ENCODE measurements at regions of chr3 and their contacts with region 1.

Region 1: GRCh38 chr3:193971261-193971751 is 164.6 kb upstream of the HES1 start:
- DNase-seq: peak; percentile 86
- ATAC-seq: peak; percentile 97
- H3K4me3 ChIP-seq: peak overlapping the region in 3 of 5 experiments; percentile 16 to 43 (median 40)
- H3K4me3 Mint-ChIP-seq: peak overlapping the region; percentile 84
- H3K27ac ChIP-seq: peak overlapping the region; percentile 13 to 28
- H3K27ac Mint-ChIP-seq: peak overlapping the region; percentile 85
- H3K4me1 ChIP-seq: peaks cover 17 to 22% of the 10 kb centered on the region in 2 donors
- H3K4me1 Mint-ChIP-seq: peaks cover 26% of the 10 kb centered on the region
- H3K27me3 ChIP-seq: peaks cover 0 to 15% (median 4%) of the 10 kb centered on the region in 4 experiments
- H3K27me3 Mint-ChIP-seq: peaks cover 17% of the 10 kb centered on the region
- CTCF ChIP-seq: no peak

Region 2: DNA sequence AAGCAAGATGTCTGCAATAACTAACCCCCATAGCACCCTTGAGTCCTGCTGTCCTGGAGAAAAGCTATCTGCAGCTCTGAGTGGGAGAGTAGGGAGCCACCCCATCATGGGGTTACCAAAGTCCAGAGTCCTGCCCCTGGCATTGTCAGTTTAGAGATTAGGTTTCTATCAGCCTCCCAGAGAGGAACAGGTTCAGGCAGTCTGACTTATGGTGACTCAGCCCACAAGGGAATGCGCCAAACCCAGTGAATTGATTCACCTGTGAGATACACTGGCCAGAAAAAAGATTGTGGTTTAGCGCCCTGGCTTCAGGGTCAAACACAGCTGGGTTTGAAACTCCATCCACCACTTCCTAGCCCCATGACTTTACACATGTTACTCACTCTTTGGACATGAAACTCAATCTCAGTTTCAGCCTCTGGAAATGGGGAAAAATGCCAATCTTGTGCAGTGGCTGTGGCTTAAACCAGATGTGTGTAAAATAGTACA is 99.0 kb before region 1 on chr3:
- CTCF ChIA-PET with region 1: interaction called, 4 read pairs
- POLR2A ChIA-PET with region 1: no interaction called
- intact Hi-C with region 1: loop called (anchors 10 kb)
- DNase-seq: peak; percentile 28
- ATAC-seq: peak; percentile 38
- H3K4me3 ChIP-seq: no peak overlapping the region
- H3K4me3 Mint-ChIP-seq: no peak overlapping the region
- H3K27ac ChIP-seq: no peak overlapping the region
- H3K27ac Mint-ChIP-seq: peak overlapping the region; percentile 53
- H3K4me1 ChIP-seq: peaks cover 44 to 49% of the 10 kb centered on the region in 2 donors
- H3K4me1 Mint-ChIP-seq: peaks cover 55% of the 10 kb centered on the region
- H3K27me3 ChIP-seq: no peaks in the 10 kb centered on the region
- H3K27me3 Mint-ChIP-seq: peaks cover 4% of the 10 kb centered on the region
- CTCF ChIP-seq: no peak

Region 3: DNA sequence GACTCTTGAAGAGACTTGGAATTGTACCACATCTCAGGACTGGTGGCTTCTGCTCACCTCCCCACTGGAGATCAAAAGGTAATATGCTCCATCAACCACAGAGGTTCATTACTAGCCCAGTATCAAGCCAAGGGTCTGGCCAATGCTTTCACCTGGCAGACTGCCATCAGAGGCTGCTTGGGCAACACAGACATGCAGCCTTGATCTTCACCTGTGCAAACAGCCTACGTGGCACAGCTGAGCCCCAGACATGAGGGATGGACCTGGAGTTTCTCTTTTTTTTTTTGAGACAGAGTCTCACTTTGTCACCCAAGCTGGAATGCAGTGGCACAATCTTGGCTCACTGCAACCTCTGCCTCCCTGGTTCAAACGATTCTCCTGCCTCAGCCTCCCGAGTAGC is 59.1 kb after region 1 on chr3:
- CTCF ChIA-PET with region 1: no interaction called
- POLR2A ChIA-PET with region 1: no interaction called
- intact Hi-C with region 1: loop called (anchors 5 kb)
- DNase-seq: no peak
- ATAC-seq: no peak
- H3K4me3 ChIP-seq: no peak overlapping the region
- H3K4me3 Mint-ChIP-seq: no peak overlapping the region
- H3K27ac ChIP-seq: no peak overlapping the region
- H3K27ac Mint-ChIP-seq: no peak overlapping the region
- H3K4me1 ChIP-seq: peaks cover 43 to 52% of the 10 kb centered on the region in 2 donors
- H3K4me1 Mint-ChIP-seq: peaks cover 55% of the 10 kb centered on the region
- H3K27me3 ChIP-seq: peaks cover 0 to 3% (median 0%) of the 10 kb centered on the region in 4 experiments
- H3K27me3 Mint-ChIP-seq: no peaks in the 10 kb centered on the region
- CTCF ChIP-seq: no peak

Region 4: GRCh38 chr3:194070634-194071409 is 99.5 kb after region 1 on chr3:
- CTCF ChIA-PET with region 1: interaction called, 4 read pairs
- POLR2A ChIA-PET with region 1: interaction called, 3 read pairs
- intact Hi-C with region 1: loop called (anchors 2 kb)
- DNase-seq: peak; percentile 96
- ATAC-seq: peak; percentile 94
- H3K4me3 ChIP-seq: peak overlapping the region; percentile 30 to 64 (median 52)
- H3K4me3 Mint-ChIP-seq: peak overlapping the region; percentile 85
- H3K27ac ChIP-seq: peak overlapping the region in 1 of 2 donors; percentile 59
- H3K27ac Mint-ChIP-seq: peak overlapping the region; percentile 87
- H3K4me1 ChIP-seq: peaks cover 15 to 22% of the 10 kb centered on the region in 2 donors
- H3K4me1 Mint-ChIP-seq: peaks cover 34% of the 10 kb centered on the region
- H3K27me3 ChIP-seq: no peaks in the 10 kb centered on the region
- H3K27me3 Mint-ChIP-seq: no peaks in the 10 kb centered on the region
- CTCF ChIP-seq: no peak

Region 5: DNA sequence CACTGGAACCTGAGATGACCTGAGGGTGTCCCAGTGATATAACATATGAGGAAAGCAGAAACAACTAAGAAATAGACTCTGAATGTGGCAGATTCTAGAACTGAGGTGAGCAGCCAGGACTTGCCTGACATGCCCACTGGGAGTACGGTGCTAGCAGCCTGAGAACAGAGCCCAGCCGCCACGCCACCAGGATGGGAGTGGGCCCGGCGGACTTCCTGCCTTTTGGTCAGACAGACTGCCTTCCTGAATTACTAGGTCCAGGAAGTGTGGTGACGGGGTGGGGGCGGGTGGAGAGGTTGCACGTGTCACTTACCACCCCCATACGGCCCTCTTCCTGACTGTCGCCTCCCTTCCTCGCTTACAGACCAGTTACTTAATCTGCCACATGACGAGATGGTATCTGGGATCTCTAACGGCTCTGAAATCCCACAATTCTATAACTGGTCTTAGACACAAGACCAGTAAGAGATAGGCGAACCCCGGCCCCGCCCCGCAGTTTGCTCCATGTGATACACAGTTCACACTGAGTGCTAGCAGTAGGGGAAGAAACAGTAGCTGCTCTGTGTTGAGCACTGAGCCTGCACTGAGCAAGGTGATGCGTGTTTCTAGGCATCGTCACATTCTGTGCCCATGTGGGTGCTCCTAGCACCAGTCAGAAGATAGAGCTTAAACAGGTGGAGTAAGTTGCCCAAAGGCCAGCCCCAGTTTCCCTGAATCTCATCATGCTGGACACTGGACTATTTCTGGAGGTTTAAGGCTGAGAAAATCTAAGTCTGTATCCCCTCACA is 284.1 kb after region 1 on chr3:
- CTCF ChIA-PET with region 1: no interaction called
- POLR2A ChIA-PET with region 1: no interaction called
- intact Hi-C with region 1: no loop called
- DNase-seq: peak; percentile 61
- ATAC-seq: peak; percentile 75
- H3K4me3 ChIP-seq: peak overlapping the region in 4 of 5 experiments; percentile 12 to 59 (median 44)
- H3K4me3 Mint-ChIP-seq: peak overlapping the region; percentile 87
- H3K27ac ChIP-seq: peak overlapping the region in 1 of 2 donors; percentile 41
- H3K27ac Mint-ChIP-seq: peak overlapping the region; percentile 74
- H3K4me1 ChIP-seq: peaks cover 10 to 13% of the 10 kb centered on the region in 2 donors
- H3K4me1 Mint-ChIP-seq: peaks cover 17% of the 10 kb centered on the region
- H3K27me3 ChIP-seq: peaks cover 0 to 18% (median 4%) of the 10 kb centered on the region in 4 experiments
- H3K27me3 Mint-ChIP-seq: peaks cover 8% of the 10 kb centered on the region
- CTCF ChIP-seq: no peak

Region 6: DNA sequence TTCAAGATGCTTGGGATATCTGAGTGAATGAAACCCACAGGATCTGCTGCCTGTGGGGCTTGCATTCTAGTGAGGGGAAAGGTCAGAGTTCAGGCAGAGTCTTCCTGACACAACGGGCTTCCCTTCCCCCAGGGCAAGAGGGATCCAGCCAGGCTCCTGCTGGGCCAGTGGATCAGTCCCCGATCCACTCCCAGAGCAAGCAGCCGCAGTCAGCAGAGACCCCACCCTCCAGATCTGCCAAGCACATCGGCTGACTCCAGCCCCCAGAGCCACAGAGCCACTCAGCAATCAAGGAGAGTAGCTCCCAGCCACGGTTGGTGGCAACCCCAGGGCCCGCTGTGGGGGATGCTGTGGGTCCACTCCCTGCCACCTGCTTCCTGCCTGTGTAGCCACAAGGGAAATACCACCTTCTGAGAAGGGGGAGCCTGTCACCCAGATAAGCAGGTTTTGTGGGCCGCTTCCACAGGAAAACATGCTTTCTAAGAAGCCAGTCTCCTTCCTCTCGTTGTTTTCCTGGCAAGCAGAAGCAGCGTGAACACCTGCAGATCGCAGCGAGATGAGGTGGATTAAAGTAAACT is 334.9 kb after region 1 on chr3:
- CTCF ChIA-PET with region 1: interaction called, 4 read pairs
- POLR2A ChIA-PET with region 1: no interaction called
- intact Hi-C with region 1: loop called (anchors 2 kb)
- DNase-seq: peak; percentile 89
- ATAC-seq: peak; percentile 63
- H3K4me3 ChIP-seq: peak overlapping the region in 3 of 5 experiments; percentile 7 to 57 (median 27)
- H3K4me3 Mint-ChIP-seq: peak overlapping the region; percentile 71
- H3K27ac ChIP-seq: peak overlapping the region; percentile 95 to 98
- H3K27ac Mint-ChIP-seq: peak overlapping the region; percentile 91
- H3K4me1 ChIP-seq: peaks cover 50 to 61% of the 10 kb centered on the region in 2 donors
- H3K4me1 Mint-ChIP-seq: peaks cover 51% of the 10 kb centered on the region
- H3K27me3 ChIP-seq: peaks cover 0 to 5% (median 2%) of the 10 kb centered on the region in 4 experiments
- H3K27me3 Mint-ChIP-seq: peaks cover 5% of the 10 kb centered on the region
- CTCF ChIP-seq: no peak

Measured in B cell (primary cell).